Thyroid gland (tissue), 4 donors: ENCODE measurements at regions of chr11 and their contacts with region 1.

Region 1: DNA sequence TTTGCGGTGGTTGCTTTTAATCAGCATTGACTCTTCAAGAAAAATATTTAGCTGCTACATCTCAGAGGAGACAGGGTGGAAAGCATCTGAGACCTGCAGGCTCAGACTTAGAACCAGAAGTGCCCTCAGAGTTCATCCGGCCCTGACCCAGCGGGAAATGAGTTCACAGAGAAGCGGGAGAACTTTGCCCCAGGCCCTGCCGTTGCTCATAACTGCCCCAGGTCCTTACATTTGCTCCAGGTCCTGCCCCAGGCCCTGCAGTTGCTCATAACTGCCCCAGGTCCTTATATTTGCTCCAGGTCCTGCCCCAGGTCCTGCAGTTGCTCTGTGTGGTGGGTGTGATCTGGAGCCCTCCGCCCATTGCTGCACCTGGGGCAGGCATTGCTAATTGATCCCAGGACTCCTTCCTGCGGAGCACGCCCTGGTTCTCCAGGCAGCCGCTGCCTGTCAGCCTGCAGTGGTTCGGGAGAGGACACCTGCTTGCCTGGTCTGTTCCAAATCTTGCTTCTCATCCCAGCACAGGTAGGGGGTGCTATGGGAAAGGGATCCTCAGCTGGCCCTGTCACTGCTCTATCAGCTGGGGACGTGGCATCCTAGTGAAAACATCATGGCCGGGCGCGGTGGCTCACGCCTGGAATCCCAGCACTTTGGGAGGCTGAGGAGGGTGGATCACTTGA is 58.1 kb upstream of the PPP6R3 start:
- DNase-seq: no peak
- H3K4me3 ChIP-seq: no peak overlapping the region
- H3K27ac ChIP-seq: no peak overlapping the region
- H3K4me1 ChIP-seq: peaks cover 21 to 31% of the 10 kb centered on the region in 2 donors
- H3K27me3 ChIP-seq: no peaks in the 10 kb centered on the region
- CTCF ChIP-seq: no peak
- POLR2A ChIP-seq: no peak

Region 2: DNA sequence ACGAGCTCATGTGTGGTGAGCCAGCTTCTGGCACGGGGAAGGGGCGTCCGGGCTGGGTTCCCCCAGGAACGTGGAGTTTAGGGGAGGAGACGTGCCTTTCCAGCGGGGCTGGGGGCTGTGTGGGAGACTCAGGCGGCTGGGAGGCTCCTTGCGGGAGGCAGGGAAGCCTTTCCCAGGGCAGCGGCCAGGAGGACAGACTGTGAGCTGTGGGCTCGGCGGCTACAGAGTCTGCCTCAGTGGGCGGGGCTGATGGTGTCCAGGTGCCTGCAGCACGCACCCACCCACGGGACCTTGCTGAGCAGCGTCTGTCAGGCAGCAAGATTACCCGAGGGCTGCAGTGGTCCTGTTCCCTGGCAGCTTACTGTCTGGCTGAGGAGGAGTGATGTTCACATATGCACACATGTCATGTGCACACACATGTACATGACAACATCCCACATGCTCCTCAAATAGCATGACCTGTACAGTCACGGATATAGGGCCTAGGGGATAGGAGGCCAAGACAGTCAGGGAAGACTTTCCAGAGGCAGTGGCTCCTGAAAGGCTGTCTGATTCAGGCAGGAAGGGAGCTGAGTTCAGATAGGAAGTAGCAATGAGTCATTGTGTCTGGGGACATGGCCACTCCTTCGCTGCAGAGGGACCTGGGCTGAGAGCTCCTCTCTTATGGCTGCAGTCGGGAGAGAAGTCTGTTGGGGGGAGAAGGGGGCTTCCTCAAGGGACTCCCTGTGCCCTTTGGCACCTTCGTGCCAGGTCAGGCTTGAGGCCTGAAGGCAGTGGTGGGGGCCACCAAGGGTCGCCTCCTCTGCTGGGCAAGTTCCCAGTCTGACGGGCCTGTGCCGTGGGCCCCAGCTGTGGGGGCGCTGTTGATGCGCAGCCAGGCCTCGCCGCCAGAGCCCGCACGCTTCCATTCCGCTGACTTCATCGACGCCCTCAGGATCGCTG is 34.8 kb after region 1 on chr11:
- intact Hi-C with region 1: loop called (anchors 5 kb)
- DNase-seq: no peak
- H3K4me3 ChIP-seq: no peak overlapping the region
- H3K27ac ChIP-seq: peak overlapping the region; percentile 15 to 65 (median 41)
- H3K4me1 ChIP-seq: peaks cover 0 to 22% of the 10 kb centered on the region in 2 donors
- H3K27me3 ChIP-seq: no peaks in the 10 kb centered on the region
- CTCF ChIP-seq: no peak
- POLR2A ChIP-seq: no peak